ENCODE measurements at regions of chr19 and their contacts with region 1.

Region 1: DNA sequence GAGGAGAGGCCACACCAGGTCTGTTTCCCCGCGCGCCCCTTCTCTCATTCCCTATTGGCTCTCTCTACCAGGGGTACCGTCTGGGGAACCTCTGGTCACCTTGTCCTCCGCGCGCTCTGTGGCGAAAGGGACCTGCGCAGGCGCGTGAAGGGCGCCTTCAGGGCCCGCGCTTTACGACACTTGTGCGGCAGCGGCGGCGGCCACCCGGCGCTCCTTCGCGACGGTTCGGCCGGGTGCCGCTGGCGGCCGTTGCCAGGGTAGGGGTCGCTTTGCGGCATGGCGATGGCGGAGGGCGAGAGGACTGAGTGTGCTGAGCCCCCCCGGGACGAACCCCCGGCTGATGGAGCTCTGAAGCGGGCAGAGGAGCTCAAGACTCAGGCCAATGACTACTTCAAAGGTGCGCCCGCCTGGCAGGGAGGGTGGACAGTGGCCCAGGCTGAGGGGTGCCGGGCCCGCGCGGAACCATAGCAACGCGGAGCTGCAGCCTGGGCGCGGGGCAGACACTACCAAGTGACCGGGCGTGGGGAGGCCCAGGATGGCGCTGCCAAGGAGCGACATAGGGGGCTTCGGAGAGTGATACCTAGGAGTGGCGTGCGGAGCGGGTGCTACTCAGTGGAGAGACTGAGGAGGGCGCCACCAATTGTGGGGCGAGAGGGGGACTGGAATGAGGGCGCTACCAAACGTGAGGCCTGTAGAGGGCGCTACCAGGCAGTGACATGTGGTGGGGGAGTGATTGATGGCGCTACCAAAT is at the start of gene PPP5C:
- DNase-seq: peak; percentile 88
- H3K4me3 ChIP-seq: peak within 1 kb of the TSS; percentile 94 to 100 (median 99)
- H3K27ac ChIP-seq: peak within 1 kb of the TSS; percentile 85
- H3K4me1 ChIP-seq: peaks cover 44% of the 10 kb centered on the region
- H3K27me3 ChIP-seq: no peaks in the 10 kb centered on the region
- CTCF ChIP-seq: peak; percentile 88 to 95
- total RNA-seq, gene PPP5C: 49.0 to 69.7 TPM

Region 2: GRCh38 chr19:46283771-46284170 is 63.2 kb before region 1 on chr19:
- CTCF ChIA-PET with region 1: interaction called, 21 read pairs
- dilution Hi-C with region 1: no loop called
- in situ Hi-C with region 1: no loop called
- intact Hi-C with region 1: loop called (anchors 1 kb)
- DNase-seq: no peak
- H3K4me3 ChIP-seq: no peak overlapping the region
- H3K27ac ChIP-seq: no peak overlapping the region
- H3K4me1 ChIP-seq: peaks cover under 1% of the 10 kb centered on the region
- H3K27me3 ChIP-seq: no peaks in the 10 kb centered on the region
- CTCF ChIP-seq: no peak

Region 3: DNA sequence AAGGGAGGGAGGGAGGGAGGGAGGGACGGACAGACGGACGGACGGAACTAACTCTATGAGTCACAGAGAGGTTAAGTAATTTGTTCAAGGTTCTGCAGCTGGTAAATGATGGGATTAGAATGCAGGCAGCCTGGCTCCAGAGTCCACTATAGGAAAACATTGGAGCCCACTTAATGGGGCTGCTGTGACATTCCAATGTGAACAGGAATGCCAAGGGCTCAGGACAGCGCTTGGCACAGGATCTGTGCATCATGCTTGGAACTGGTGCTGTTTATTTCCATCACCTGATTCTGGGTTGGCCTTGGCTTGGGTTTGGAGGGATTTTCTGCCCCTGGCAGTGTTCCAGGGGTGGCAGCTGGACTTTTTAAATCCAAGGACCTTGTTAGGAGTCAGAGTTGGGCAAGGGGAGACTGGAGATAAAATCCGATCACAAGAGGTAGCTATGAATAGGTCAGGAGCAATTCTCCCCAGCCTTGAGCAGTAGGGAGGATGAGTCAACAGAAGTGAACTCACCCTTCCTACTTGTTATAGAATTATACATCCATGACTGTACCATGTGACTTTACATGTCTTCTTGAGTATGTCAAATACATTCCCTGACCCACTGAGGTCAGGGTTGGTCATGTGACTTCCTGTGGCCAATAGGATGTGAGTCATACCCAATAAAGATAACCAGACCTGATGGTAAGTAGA is 58.0 kb before region 1 on chr19:
- CTCF ChIA-PET with region 1: interaction called, 21 read pairs
- dilution Hi-C with region 1: no loop called
- in situ Hi-C with region 1: no loop called
- intact Hi-C with region 1: no loop called
- DNase-seq: peak; percentile 94
- H3K4me3 ChIP-seq: no peak overlapping the region
- H3K27ac ChIP-seq: peak overlapping the region; percentile 45
- H3K4me1 ChIP-seq: peaks cover 10% of the 10 kb centered on the region
- H3K27me3 ChIP-seq: no peaks in the 10 kb centered on the region
- CTCF ChIP-seq: no peak

Region 4: DNA sequence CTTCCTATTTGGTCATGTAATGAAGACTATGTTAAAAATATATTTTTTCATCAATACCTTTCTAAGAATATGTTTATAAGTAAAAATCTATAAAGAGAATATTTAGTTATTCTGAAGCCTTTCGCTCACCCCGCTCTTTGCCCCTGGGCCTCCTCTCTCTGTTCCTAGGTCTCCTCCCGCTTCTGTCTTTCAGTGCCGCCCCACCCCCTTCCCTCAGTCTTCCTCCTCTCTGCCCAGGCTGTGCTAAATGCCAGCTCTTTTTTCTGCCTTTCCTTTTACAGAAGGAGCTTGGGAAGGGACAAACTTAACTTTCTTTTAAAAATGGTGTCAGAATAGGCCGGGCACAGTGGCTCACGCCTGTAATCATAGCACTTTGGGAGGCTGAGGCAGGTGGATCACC is 27.4 kb before region 1 on chr19:
- CTCF ChIA-PET with region 1: no interaction called
- dilution Hi-C with region 1: no loop called
- in situ Hi-C with region 1: no loop called
- intact Hi-C with region 1: no loop called
- DNase-seq: no peak
- H3K4me3 ChIP-seq: no peak overlapping the region
- H3K27ac ChIP-seq: no peak overlapping the region
- H3K4me1 ChIP-seq: no peaks in the 10 kb centered on the region
- H3K27me3 ChIP-seq: no peaks in the 10 kb centered on the region
- CTCF ChIP-seq: no peak

Region 5: DNA sequence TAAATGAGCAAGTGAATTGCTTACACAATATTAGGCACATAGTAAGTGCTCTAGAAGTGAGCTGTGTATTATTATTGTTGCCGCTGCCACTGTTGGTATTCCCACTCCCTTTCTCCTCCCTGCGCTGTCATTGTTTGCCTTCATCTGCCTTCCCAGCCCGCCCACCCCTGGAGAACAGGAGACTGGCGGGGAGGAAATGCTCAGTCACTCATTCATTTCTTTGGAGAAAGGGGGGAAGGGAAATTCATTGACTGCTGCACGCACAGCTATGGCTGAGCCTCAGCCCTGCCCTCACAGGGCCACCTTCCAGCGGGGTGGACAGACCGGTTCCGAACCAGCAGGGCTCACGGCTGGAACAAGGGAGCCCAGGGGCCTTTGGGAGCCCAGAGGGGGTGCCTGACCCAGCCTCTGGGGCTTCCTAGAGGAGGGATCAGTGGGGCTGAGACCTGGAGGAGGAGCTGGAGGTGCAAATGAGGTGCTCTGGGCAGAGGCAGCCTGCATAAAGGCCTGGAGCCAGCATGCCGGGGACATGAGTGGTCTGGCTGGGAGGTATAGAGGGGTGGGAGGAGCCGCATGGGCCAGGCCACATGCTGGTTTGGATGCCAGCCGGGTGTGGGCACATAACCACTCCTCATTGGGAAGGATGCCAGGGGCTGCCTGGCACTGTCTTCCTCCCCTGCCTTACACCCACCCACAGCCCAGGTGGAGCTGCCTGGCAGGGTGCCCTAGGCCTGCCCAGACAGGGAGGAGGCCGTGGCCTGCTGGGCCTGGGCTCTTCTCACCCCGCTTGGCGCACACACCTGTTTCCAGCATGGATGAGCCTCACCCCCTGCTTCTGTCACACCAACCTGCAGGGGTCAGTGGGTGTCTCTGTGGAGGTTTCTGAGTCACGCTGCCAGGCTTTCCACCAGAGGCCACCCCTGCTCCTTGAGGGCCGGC is 26.7 kb after region 1 on chr19:
- CTCF ChIA-PET with region 1: no interaction called
- dilution Hi-C with region 1: no loop called
- in situ Hi-C with region 1: no loop called
- intact Hi-C with region 1: loop called (anchors 1 kb)
- DNase-seq: peak; percentile 99
- H3K4me3 ChIP-seq: peak overlapping the region in 2 of 3 experiments; percentile 29 to 35
- H3K27ac ChIP-seq: peak overlapping the region; percentile 91
- H3K4me1 ChIP-seq: peaks cover 38% of the 10 kb centered on the region
- H3K27me3 ChIP-seq: no peaks in the 10 kb centered on the region
- CTCF ChIP-seq: peak in 1 of 2 donors; percentile 34

Region 6: DNA sequence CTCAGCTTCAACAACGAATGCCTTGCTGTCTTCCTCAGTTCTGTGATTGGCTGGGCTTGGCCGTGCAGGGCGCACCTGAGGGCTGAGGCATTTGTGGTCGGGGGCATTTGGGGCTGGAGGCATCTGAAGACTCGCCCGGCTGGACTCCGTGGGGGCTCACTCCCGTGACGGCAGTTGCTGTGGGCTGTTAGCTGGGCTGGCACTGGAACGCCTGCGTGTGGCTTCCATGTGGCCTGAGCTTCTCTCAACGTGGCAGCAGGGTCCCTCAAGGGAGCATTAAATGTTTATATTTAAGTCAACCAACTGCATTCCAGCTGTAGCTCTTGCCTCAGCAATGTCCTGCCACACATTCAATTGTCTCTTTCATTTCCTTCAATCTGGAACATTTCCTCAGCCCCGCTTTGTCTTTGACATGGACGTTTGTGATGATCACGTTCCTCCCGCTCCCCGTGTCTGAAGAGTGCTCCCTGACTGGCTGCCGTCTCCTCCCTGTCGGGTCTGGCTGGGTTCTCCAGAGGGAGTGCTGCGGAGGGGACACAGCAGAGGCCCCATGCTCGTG is 45.3 kb after region 1 on chr19:
- CTCF ChIA-PET with region 1: no interaction called
- dilution Hi-C with region 1: no loop called
- in situ Hi-C with region 1: no loop called
- intact Hi-C with region 1: loop called (anchors 1 kb)
- DNase-seq: no peak
- H3K4me3 ChIP-seq: no peak overlapping the region
- H3K27ac ChIP-seq: no peak overlapping the region
- H3K4me1 ChIP-seq: no peaks in the 10 kb centered on the region
- H3K27me3 ChIP-seq: no peaks in the 10 kb centered on the region
- CTCF ChIP-seq: no peak

Region 7: GRCh38 chr19:46442808-46443450 is 95.9 kb after region 1 on chr19:
- CTCF ChIA-PET with region 1: no interaction called
- dilution Hi-C with region 1: no loop called
- in situ Hi-C with region 1: no loop called
- intact Hi-C with region 1: no loop called
- DNase-seq: peak; percentile 69
- H3K4me3 ChIP-seq: no peak overlapping the region
- H3K27ac ChIP-seq: no peak overlapping the region
- H3K4me1 ChIP-seq: peaks cover 6% of the 10 kb centered on the region
- H3K27me3 ChIP-seq: no peaks in the 10 kb centered on the region
- CTCF ChIP-seq: no peak

Region 8: DNA sequence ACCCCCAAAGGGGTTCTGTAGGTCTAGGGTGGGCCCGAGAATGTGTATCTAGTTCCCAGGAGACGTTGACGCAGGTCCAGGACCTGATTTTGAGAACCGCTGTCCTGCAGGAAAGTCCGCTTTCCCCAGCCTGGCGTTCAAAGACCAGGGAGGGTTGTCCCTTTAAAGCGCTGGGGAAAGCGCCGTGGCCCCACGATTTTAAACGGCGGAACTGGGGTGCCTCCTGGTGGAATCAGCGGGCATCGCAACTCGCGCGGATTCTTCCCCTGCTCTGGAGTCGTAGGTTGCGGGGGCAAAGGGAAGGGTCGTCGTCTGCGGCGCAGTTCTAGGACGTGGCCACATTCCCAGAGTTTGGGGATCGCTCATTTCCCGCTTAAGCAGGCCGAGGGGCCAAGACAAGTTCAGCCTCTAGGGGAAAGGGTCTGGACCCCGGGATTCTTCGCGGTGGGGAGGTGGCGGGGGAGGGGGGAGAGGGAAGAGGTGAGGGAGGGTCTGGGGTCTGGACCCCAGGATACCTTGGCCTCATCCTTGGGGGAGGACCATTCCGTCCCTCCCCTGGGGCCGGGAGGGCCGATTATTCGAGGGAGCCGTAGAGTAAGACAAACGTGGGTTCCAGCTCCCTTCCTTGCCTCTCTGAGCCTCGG is 140.9 kb after region 1 on chr19:
- CTCF ChIA-PET with region 1: no interaction called
- dilution Hi-C with region 1: no loop called
- in situ Hi-C with region 1: no loop called
- intact Hi-C with region 1: loop called (anchors 2 kb)
- DNase-seq: peak; percentile 59
- H3K4me3 ChIP-seq: peak overlapping the region in 1 of 3 experiments; percentile 42
- H3K27ac ChIP-seq: no peak overlapping the region
- H3K4me1 ChIP-seq: peaks cover 6% of the 10 kb centered on the region
- H3K27me3 ChIP-seq: no peaks in the 10 kb centered on the region
- CTCF ChIP-seq: peak; percentile 86 to 95

Region 9: DNA sequence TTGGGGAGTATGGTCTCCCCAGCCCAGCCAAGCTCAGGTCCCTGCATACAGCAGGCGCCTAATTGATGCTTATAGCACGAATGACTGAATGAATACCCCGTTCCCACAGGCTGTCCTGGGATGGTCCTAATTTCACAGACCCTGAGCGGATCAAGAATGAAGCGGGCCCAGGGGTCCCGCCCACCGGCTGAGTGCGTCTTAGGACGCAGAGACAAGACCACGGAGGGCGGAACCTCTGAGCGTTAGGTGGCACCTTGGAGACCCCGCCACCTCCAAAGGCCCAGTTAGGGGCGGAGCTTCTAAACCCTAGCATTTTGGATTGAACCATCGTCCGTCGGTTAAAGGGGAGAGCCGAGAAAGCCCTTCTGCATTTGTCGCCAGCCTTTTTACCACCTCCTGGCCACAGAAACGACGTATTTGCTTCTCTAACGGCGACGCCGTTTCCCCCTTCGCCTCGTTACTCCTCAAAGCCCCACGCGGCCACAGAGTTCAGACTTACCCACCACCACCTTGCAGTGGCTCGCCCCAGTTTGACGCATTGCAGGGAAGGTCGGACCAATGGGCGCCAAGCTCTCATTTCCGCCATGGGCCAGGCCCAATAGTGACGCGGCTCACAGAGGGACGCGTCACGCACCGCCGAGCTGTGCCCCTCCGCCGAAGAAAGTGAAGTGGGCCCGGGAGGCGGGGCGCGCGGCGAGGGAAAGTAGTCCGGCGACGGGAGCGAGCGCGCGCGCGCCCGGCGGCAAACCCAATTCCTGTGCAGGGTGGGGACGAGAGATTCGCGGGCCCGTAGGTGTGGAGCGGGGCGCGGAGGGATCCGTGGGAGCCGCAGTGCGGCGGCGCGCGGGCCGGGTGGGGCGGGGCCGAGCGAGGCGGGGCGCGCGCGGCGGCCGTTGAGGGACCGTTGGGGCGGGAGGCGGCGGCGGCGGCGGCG is 253.7 kb after region 1 on chr19:
- CTCF ChIA-PET with region 1: interaction called, 35 read pairs
- dilution Hi-C with region 1: no loop called
- in situ Hi-C with region 1: no loop called
- intact Hi-C with region 1: no loop called
- DNase-seq: peak; percentile 97
- H3K4me3 ChIP-seq: peak overlapping the region; percentile 77 to 98 (median 97)
- H3K27ac ChIP-seq: peak overlapping the region; percentile 100
- H3K4me1 ChIP-seq: peaks cover 16% of the 10 kb centered on the region
- H3K27me3 ChIP-seq: no peaks in the 10 kb centered on the region
- CTCF ChIP-seq: no peak

Measured in mammary epithelial cell (primary cell).